ENCODE measurements at regions of chr12 and their contacts with region 1.

Region 1: GRCh38 chr12:108193917-108194316 is 64.8 kb downstream of the WSCD2 start:
- DNase-seq: no peak
- H3K4me3 Mint-ChIP-seq: no peak overlapping the region
- H3K27ac Mint-ChIP-seq: no peak overlapping the region
- H3K4me1 Mint-ChIP-seq: no peaks in the 10 kb centered on the region
- H3K27me3 Mint-ChIP-seq: no peaks in the 10 kb centered on the region

Region 2: DNA sequence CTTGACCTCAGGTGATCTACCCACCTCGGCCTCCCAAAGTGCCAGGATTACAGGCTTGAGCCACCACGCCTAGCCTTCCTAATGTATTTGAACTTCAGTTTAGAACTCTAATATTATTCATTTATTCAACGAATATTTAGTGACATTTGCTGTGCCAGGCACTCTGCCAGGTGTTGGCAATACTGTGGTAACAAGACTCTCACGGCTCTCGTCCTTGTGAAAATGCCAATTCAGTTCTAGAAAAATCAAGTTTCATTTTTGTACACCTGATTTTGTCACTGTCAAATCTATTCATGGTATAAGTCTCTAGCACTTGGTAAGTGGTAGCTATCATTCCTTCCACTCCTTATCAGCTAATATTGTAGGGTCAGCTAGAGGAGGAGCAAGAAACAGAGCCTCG is 514.6 kb before region 1 on chr12:
- intact Hi-C with region 1: loop called (anchors 5 kb)
- DNase-seq: no peak
- H3K4me3 Mint-ChIP-seq: no peak overlapping the region
- H3K27ac Mint-ChIP-seq: no peak overlapping the region
- H3K4me1 Mint-ChIP-seq: no peaks in the 10 kb centered on the region
- H3K27me3 Mint-ChIP-seq: peaks cover 11% of the 10 kb centered on the region

Region 3: GRCh38 chr12:107829271-107829670 is 364.6 kb before region 1 on chr12:
- intact Hi-C with region 1: no loop called
- DNase-seq: no peak
- H3K4me3 Mint-ChIP-seq: no peak overlapping the region
- H3K27ac Mint-ChIP-seq: no peak overlapping the region
- H3K4me1 Mint-ChIP-seq: no peaks in the 10 kb centered on the region
- H3K27me3 Mint-ChIP-seq: peaks cover 18% of the 10 kb centered on the region

Region 4: DNA sequence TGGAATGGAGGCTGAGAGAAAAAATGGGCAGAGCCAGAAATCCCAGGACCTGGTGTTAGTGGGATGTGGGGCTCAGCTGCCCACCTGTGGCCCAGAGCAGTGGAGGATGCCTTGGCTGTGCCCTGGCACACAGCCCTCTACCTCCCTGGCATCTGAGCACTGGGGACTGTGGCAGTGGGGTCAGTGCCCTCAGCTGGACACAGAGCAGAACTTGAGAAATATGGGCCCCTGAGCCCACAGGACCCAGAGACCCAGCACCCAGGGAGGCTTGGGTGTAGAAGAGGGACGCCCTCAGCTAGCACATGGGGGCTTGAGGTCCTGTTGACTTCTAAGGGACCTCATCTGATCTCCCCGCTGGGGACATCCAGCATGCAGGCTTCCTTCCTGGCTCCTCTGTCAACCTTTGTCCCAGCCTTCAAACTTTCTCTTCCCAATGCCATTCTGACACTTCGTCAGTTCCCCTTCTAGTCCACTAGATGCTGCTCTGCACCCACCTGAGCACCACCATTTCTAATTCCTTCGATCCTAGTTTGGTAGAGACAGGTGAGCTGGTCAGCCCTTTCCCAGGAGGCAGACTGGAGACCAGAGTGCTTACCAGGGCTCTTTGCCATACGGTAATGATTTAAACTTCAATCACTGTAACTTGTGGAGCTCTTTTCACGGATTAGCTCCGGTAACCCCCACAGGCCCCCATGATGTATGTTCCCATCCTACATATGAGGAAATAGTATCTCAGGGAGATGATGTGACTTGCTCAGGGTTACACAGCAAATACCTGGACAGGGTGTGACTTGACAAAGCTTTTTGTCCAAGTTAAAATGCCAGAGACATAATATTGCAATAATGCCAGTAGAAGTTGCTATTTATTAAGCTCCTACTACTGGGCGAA is 275.8 kb before region 1 on chr12:
- intact Hi-C with region 1: loop called (anchors 5 kb)
- DNase-seq: no peak
- H3K4me3 Mint-ChIP-seq: no peak overlapping the region
- H3K27ac Mint-ChIP-seq: no peak overlapping the region
- H3K4me1 Mint-ChIP-seq: no peaks in the 10 kb centered on the region
- H3K27me3 Mint-ChIP-seq: peaks cover 8% of the 10 kb centered on the region

Region 5: GRCh38 chr12:107992870-107993451 is 201.0 kb before region 1 on chr12:
- intact Hi-C with region 1: loop called (anchors 5 kb)
- DNase-seq: no peak
- H3K4me3 Mint-ChIP-seq: no peak overlapping the region
- H3K27ac Mint-ChIP-seq: no peak overlapping the region
- H3K4me1 Mint-ChIP-seq: no peaks in the 10 kb centered on the region
- H3K27me3 Mint-ChIP-seq: peaks cover 1% of the 10 kb centered on the region

Region 6: GRCh38 chr12:108972358-108972757 is 778.4 kb after region 1 on chr12:
- intact Hi-C with region 1: no loop called
- DNase-seq: no peak
- H3K4me3 Mint-ChIP-seq: no peak overlapping the region
- H3K27ac Mint-ChIP-seq: no peak overlapping the region
- H3K4me1 Mint-ChIP-seq: no peaks in the 10 kb centered on the region
- H3K27me3 Mint-ChIP-seq: peaks cover 4% of the 10 kb centered on the region

Measured in activated T-helper 1 cell treated with anti-CD3 and anti-CD28 coated beads, Interleukin-12 subunit alpha, Interleukin-12 subunit beta, Interleukin-2, Interleukin-4 antibody, amounts not matched to agents 30 ng/mL and 10 ng/mL and 1 ng/mL, durations not matched to agents 14 hours and 24 hours and 36 hours (primary cell).